Esophagus muscularis mucosa (tissue), 4 donors: ENCODE measurements at regions of chr12 and their contacts with region 1.

Region 1: GRCh38 chr12:27383429-27384260 is 51.0 kb downstream of the BMAL2 start:
- DNase-seq: peak; percentile 93
- H3K4me3 ChIP-seq: no peak overlapping the region
- H3K27ac ChIP-seq: no peak overlapping the region
- H3K4me1 ChIP-seq: no peaks in the 10 kb centered on the region
- H3K27me3 ChIP-seq: no peaks in the 10 kb centered on the region
- CTCF ChIP-seq: peak; percentile 76 to 90 (median 78)
- EP300 ChIP-seq: no peak
- POLR2A ChIP-seq: no peak

Region 2: GRCh38 chr12:26878661-26879119 is 505.0 kb before region 1 on chr12:
- intact Hi-C with region 1: no loop called
- DNase-seq: peak; percentile 92
- H3K4me3 ChIP-seq: no peak overlapping the region
- H3K27ac ChIP-seq: peak overlapping the region; percentile 41 to 75 (median 54)
- H3K4me1 ChIP-seq: peaks cover 16 to 19% (median 17%) of the 10 kb centered on the region in 4 donors
- H3K27me3 ChIP-seq: no peaks in the 10 kb centered on the region
- CTCF ChIP-seq: no peak
- EP300 ChIP-seq: no peak
- POLR2A ChIP-seq: no peak

Region 3: GRCh38 chr12:27024291-27024690 is 359.4 kb before region 1 on chr12:
- intact Hi-C with region 1: loop called (anchors 10 kb)
- DNase-seq: no peak
- H3K4me3 ChIP-seq: peak overlapping the region in 1 of 4 donors; percentile 68
- H3K27ac ChIP-seq: no peak overlapping the region
- H3K4me1 ChIP-seq: peaks cover 20 to 29% (median 24%) of the 10 kb centered on the region in 4 donors
- H3K27me3 ChIP-seq: no peaks in the 10 kb centered on the region
- CTCF ChIP-seq: no peak
- EP300 ChIP-seq: no peak
- POLR2A ChIP-seq: no peak

Region 4: GRCh38 chr12:27332407-27333301 is 51.0 kb before region 1 on chr12 and contains the start of gene BMAL2:
- intact Hi-C with region 1: loop called (anchors 5 kb)
- DNase-seq: no peak
- H3K4me3 ChIP-seq: peak within 1 kb of the TSS; percentile 74 to 90 (median 80)
- H3K27ac ChIP-seq: peak within 1 kb of the TSS; percentile 56 to 62 (median 59)
- H3K4me1 ChIP-seq: peaks cover 13 to 34% (median 31%) of the 10 kb centered on the region in 4 donors
- H3K27me3 ChIP-seq: peaks cover 0 to 11% (median 0%) of the 10 kb centered on the region in 4 donors
- CTCF ChIP-seq: no peak
- EP300 ChIP-seq: no peak
- POLR2A ChIP-seq: no peak
- total RNA-seq, gene BMAL2: 3.6 to 7.3 (median 5.0) TPM

Region 5: DNA sequence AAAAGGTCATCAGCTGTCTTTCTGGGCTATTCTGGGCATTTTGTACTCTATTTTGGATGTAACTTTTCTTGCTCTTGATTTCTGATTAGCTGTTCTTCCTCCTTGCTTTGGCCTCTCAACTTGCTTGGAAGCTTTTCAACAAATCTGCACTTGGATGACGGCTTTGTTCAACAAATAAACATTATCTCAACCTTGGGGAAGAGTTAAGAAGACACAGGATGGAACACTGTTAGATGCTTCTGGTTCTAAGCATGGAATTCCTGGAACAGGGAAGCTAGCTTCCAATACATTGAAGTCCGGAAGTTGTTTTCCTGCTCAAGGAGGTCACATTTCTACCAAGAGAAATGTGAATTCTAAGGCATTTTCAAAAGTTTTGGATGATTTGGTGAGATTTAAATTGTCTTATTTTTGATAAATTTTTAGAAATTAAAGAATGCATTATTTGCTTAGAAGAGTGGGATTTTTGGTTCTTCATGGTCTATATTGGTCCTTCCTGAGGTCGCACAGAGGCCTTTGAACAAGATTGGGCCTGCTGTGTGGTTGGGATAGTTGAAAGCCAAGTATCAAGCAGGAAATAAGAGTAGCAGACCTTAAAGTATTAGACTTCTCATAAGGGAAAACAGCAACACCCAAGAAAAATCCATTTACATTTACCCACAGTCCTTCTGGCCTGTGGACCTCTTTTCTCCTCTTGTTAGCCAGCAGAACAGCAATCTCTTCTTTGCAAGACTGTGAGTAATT is 199.6 kb after region 1 on chr12:
- intact Hi-C with region 1: no loop called
- DNase-seq: no peak
- H3K4me3 ChIP-seq: no peak overlapping the region
- H3K27ac ChIP-seq: peak overlapping the region; percentile 10 to 56 (median 30)
- H3K4me1 ChIP-seq: peaks cover 20 to 51% (median 30%) of the 10 kb centered on the region in 4 donors
- H3K27me3 ChIP-seq: no peaks in the 10 kb centered on the region
- CTCF ChIP-seq: no peak
- EP300 ChIP-seq: no peak
- POLR2A ChIP-seq: no peak